ENCODE measurements at regions of chr3 and their contacts with region 1.

Region 1: DNA sequence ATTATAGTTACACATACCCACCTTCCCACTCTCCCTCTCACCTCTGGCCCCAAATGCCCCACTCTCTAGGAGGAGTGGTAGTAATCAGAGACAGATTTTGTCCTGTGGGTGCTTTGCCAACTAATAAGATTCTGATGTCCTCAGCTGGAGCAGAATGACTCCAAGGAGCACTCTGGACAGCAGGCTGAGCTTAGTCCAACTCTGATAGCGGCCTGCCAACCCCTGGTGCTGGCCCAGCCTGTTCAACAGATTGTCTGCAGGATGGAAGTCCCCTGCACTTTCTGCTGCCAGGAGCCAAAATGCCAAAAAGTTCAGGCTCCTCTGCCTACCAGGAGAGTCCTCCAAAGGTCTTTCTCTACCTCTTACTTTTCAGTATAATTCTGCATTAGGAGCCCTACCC is 160.5 kb upstream of the UMPS start:
- DNase-seq: no peak
- H3K4me3 Mint-ChIP-seq: no peak overlapping the region
- H3K27ac Mint-ChIP-seq: no peak overlapping the region
- H3K4me1 Mint-ChIP-seq: peaks cover 10% of the 10 kb centered on the region
- H3K27me3 Mint-ChIP-seq: peaks cover 25% of the 10 kb centered on the region

Region 2: GRCh38 chr3:124504332-124505059 is 65.3 kb before region 1 on chr3:
- CTCF ChIA-PET with region 1: no interaction called
- POLR2A ChIA-PET with region 1: no interaction called
- DNase-seq: no peak
- H3K4me3 Mint-ChIP-seq: no peak overlapping the region
- H3K27ac Mint-ChIP-seq: no peak overlapping the region
- H3K4me1 Mint-ChIP-seq: no peaks in the 10 kb centered on the region
- H3K27me3 Mint-ChIP-seq: peaks cover 46% of the 10 kb centered on the region

Region 3: GRCh38 chr3:124552239-124552638 is 17.5 kb before region 1 on chr3:
- CTCF ChIA-PET with region 1: interaction called, 17 read pairs
- POLR2A ChIA-PET with region 1: no interaction called
- DNase-seq: no peak
- H3K4me3 Mint-ChIP-seq: no peak overlapping the region
- H3K27ac Mint-ChIP-seq: no peak overlapping the region
- H3K4me1 Mint-ChIP-seq: peaks cover 11% of the 10 kb centered on the region
- H3K27me3 Mint-ChIP-seq: peaks cover 69% of the 10 kb centered on the region

Region 4: GRCh38 chr3:124592621-124593441 is 23.1 kb after region 1 on chr3:
- CTCF ChIA-PET with region 1: no interaction called
- POLR2A ChIA-PET with region 1: no interaction called
- DNase-seq: no peak
- H3K4me3 Mint-ChIP-seq: no peak overlapping the region
- H3K27ac Mint-ChIP-seq: no peak overlapping the region
- H3K4me1 Mint-ChIP-seq: peaks cover 15% of the 10 kb centered on the region
- H3K27me3 Mint-ChIP-seq: peaks cover 39% of the 10 kb centered on the region

Region 5: GRCh38 chr3:124768812-124769211 is 199.1 kb after region 1 on chr3:
- CTCF ChIA-PET with region 1: no interaction called
- POLR2A ChIA-PET with region 1: no interaction called
- DNase-seq: no peak
- H3K4me3 Mint-ChIP-seq: no peak overlapping the region
- H3K27ac Mint-ChIP-seq: no peak overlapping the region
- H3K4me1 Mint-ChIP-seq: no peaks in the 10 kb centered on the region
- H3K27me3 Mint-ChIP-seq: peaks cover 17% of the 10 kb centered on the region